ENCODE measurements at regions of chr11 and their contacts with region 1.

Region 1: GRCh38 chr11:26820739-26821138 is 98.9 kb upstream of the SLC5A12 start:
- DNase-seq: no peak
- ATAC-seq: peak; percentile 90

Region 2: DNA sequence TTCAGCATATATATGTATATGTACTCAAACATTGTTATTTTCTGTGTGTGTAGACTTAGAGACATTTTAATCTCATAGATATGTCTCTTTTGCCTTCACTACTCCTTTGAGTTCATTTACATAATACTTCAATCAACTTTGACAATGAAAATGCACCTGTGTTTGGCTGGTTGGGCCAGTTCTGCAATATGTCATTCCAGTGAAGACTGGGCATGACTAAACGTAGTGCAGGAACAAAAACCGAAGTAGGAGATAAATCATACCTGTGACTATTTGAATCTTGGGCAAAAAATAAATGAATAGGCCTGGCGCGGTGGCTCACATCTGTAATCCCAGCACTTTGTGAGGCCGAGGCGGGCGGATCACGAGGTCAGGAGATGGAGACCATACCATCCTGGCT is 1128.8 kb before region 1 on chr11:
- intact Hi-C with region 1: no loop called
- DNase-seq: no peak
- ATAC-seq: no peak

Region 3: DNA sequence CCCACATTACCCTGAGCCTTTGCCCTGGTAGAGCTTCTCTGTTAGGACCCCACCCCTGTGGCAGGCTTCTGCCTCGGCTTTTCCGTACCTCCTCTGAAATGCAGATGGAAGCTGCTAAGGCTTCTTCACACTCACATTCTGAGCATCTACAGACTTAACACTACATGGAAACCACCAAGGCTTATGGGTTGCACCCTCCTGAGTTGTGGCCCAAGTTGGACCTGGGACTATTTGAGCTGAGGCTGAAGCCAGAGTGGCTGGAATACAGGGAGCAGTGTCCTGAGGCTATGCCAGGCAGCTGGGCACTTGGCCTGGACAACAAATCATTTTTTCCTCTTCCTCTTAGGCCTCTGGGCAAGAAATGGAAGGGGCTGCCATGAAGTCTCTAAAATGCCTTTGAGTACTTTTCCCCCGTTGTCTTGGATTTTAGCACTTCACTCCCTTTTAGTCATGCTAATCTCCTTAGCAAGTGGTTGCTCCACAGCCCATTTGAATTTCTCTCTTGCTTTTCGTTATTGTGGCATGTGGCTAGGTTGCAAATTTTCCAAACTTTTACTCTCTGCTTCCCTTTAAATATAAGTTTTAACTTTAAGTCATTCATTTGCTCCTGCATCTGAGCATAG is 58.3 kb after region 1 on chr11:
- intact Hi-C with region 1: loop called (anchors 10 kb)
- DNase-seq: no peak
- ATAC-seq: no peak

Measured in sciatic nerve (tissue), 2 donors.